PC-9 (cell line): ENCODE measurements at regions of chr11 and their contacts with region 1.

Region 1: GRCh38 chr11:72222907-72223614 is 1.5 kb upstream of the INPPL1 start:
- DNase-seq: peak; percentile 84 to 97
- H3K4me3 ChIP-seq: peak overlapping the region; percentile 97
- H3K27ac ChIP-seq: peak overlapping the region; percentile 50
- H3K4me1 ChIP-seq: peaks cover 23% of the 10 kb centered on the region
- H3K27me3 ChIP-seq: no peaks in the 10 kb centered on the region
- CTCF ChIP-seq: peak; percentile 68; the same call in 1 of the 2 replicates

Region 2: GRCh38 chr11:71913756-71914526 is 309.1 kb before region 1 on chr11:
- CTCF ChIA-PET with region 1: interaction called, 16 read pairs
- POLR2A ChIA-PET with region 1: no interaction called
- intact Hi-C with region 1: no loop called
- DNase-seq: no peak
- H3K4me3 ChIP-seq: no peak overlapping the region
- H3K27ac ChIP-seq: no peak overlapping the region
- H3K4me1 ChIP-seq: peaks cover 11% of the 10 kb centered on the region
- H3K27me3 ChIP-seq: no peaks in the 10 kb centered on the region
- CTCF ChIP-seq: no peak

Region 3: GRCh38 chr11:72112321-72113219 is 110.5 kb before region 1 on chr11 and contains the start of gene ANAPC15:
- CTCF ChIA-PET with region 1: interaction called, 6 read pairs
- POLR2A ChIA-PET with region 1: interaction called, 4 read pairs
- intact Hi-C with region 1: loop called (anchors 1 kb)
- DNase-seq: peak; percentile 97 to 99
- H3K4me3 ChIP-seq: peak within 1 kb of the TSS; percentile 56
- H3K27ac ChIP-seq: peak within 1 kb of the TSS; percentile 70
- H3K4me1 ChIP-seq: peaks cover 14% of the 10 kb centered on the region
- H3K27me3 ChIP-seq: no peaks in the 10 kb centered on the region
- CTCF ChIP-seq: no peak
- total RNA-seq, gene ANAPC15: 77.2 and 97.8 TPM in 2 replicates

Region 4: DNA sequence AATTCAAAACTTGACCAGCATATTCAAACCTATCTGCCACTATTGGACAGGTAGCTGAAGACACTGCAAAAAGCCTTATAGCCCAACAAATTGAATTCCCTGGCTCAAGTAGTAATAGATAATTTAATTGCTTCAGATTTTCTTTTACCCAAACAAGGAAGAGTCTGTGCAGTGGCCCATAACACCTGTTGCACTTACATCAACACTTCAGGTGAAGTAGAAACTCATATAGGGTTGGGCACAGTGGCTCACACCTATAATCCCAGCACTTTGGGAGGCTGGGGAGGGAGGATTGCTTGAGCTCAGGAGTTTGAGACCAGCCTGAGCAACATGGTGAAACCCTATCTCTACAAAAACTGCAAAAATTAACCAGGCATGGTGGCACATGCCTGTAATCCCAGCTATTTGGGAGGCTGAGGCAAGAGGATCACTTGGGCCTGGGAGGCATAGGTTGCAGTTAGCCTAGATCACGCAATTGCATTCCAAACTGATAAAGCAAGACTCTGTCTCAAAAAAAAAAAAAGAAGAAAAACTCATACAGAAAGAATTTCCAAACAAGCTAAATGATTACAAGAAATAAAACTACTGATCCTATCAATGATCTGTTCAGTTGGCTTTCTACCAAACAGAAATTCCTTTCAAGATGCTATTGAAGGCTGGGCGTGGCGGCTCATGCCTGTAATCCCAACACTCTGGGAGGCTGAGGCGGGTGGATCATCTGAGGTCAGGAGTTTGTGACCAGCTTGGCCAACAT is 78.1 kb before region 1 on chr11:
- CTCF ChIA-PET with region 1: no interaction called
- POLR2A ChIA-PET with region 1: interaction called, 6 read pairs
- intact Hi-C with region 1: loop called (anchors 2 kb)
- DNase-seq: peak; percentile 63 to 89
- H3K4me3 ChIP-seq: no peak overlapping the region
- H3K27ac ChIP-seq: peak overlapping the region; percentile 50
- H3K4me1 ChIP-seq: peaks cover 6% of the 10 kb centered on the region; the same call in 1 of the 2 replicates
- H3K27me3 ChIP-seq: no peaks in the 10 kb centered on the region
- CTCF ChIP-seq: no peak